ENCODE measurements at regions of chr6 and their contacts with region 1.

Region 1: GRCh38 chr6:44655412-44656342 is 268.2 kb downstream of the CDC5L start:
- DNase-seq: peak; percentile 61 to 68 (median 62)
- H3K4me3 ChIP-seq: no peak overlapping the region
- H3K4me3 Mint-ChIP-seq: peak overlapping the region in 7 of 8 donors; percentile 34 to 76 (median 61)
- H3K27ac ChIP-seq: peak overlapping the region; percentile 6
- H3K27ac Mint-ChIP-seq: peak overlapping the region; percentile 30 to 94 (median 85)
- H3K4me1 ChIP-seq: peaks cover 8% of the 10 kb centered on the region
- H3K4me1 Mint-ChIP-seq: peaks cover 5 to 12% (median 6%) of the 10 kb centered on the region in 4 donors
- H3K27me3 ChIP-seq: no peaks in the 10 kb centered on the region
- H3K27me3 Mint-ChIP-seq: peaks cover 0 to 3% of the 10 kb centered on the region in 2 donors

Region 2: DNA sequence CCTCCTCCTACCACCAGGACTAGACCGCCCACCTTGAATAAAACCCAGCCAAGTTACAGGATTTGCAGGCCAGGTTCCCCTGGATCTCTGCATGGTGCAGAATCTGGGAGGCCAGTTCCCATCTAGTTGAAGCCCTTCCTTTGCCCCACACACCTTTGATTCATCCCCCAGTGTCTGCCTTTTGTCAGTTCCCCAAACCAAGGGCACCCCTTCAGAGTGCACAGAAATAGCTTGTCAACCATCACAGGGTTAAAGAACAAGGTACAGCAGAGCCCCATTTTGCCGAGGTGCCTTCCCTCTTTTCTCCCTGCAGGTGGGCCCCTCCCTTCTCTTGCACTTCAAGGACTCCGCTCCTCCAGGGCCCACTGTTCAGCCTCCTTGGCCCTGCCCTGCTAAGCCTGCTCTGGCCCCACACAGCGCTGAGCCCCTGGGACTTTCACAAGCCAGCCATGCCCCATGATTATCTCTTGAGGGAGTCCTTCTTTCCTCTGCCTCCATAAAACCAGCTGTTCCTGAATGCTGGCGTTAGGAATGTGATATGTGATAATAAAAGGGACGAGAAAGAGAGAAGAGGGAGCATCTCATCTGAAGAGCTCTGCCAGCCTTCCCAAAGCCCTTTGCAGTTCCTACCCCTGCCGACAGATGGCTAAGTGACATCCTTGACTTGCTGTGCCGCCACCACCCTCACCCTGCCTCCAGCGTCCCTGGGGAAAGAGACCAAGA is 12.2 kb after region 1 on chr6:
- CTCF ChIA-PET with region 1: interaction called, 34 read pairs
- POLR2A ChIA-PET with region 1: no interaction called
- intact Hi-C with region 1: no loop called
- DNase-seq: peak in 4 of 5 donors; percentile 9 to 12 (median 11)
- H3K4me3 ChIP-seq: no peak overlapping the region
- H3K4me3 Mint-ChIP-seq: no peak overlapping the region
- H3K27ac ChIP-seq: no peak overlapping the region
- H3K27ac Mint-ChIP-seq: peak overlapping the region in 1 of 7 donors; percentile 30
- H3K4me1 ChIP-seq: no peaks in the 10 kb centered on the region
- H3K4me1 Mint-ChIP-seq: no peaks in the 10 kb centered on the region
- H3K27me3 ChIP-seq: no peaks in the 10 kb centered on the region
- H3K27me3 Mint-ChIP-seq: peaks cover 0 to 1% of the 10 kb centered on the region in 2 donors

Region 3: DNA sequence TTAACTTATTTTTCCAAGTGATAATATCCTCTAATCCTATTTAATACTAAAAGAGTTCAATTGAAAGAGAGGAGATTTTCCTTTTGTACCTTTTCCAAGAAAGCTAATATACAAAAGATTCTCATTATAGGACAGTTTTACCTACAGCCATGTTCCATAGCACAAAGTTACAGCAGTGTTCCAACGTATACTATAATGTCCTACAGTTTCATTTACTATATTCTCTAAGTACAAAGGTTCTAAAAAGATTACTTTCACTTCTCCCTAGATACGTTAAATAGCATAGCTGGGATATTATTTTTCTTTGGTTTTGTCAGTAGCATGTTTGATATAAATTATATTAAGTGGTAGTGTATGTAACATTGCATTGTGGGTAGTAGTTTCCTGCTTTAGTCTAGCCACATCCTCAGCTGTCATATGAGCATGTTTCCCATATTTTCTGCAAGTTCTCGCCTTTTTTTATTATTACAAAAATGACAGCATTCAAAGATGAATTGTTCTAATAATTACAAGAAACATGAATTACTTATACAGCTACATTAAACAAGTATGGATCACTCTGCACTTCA is 668.1 kb after region 1 on chr6:
- CTCF ChIA-PET with region 1: interaction called, 12 read pairs
- POLR2A ChIA-PET with region 1: no interaction called
- intact Hi-C with region 1: no loop called
- DNase-seq: peak in 4 of 5 donors; percentile 21 to 31 (median 26)
- H3K4me3 ChIP-seq: no peak overlapping the region
- H3K4me3 Mint-ChIP-seq: peak overlapping the region in 7 of 8 donors; percentile 26 to 64 (median 60)
- H3K27ac ChIP-seq: no peak overlapping the region
- H3K27ac Mint-ChIP-seq: peak overlapping the region in 3 of 7 donors; percentile 50 to 68 (median 57)
- H3K4me1 ChIP-seq: peaks cover 24% of the 10 kb centered on the region
- H3K4me1 Mint-ChIP-seq: peaks cover 12 to 37% (median 17%) of the 10 kb centered on the region in 4 donors
- H3K27me3 ChIP-seq: no peaks in the 10 kb centered on the region
- H3K27me3 Mint-ChIP-seq: no peaks in the 10 kb centered on the region

Region 4: DNA sequence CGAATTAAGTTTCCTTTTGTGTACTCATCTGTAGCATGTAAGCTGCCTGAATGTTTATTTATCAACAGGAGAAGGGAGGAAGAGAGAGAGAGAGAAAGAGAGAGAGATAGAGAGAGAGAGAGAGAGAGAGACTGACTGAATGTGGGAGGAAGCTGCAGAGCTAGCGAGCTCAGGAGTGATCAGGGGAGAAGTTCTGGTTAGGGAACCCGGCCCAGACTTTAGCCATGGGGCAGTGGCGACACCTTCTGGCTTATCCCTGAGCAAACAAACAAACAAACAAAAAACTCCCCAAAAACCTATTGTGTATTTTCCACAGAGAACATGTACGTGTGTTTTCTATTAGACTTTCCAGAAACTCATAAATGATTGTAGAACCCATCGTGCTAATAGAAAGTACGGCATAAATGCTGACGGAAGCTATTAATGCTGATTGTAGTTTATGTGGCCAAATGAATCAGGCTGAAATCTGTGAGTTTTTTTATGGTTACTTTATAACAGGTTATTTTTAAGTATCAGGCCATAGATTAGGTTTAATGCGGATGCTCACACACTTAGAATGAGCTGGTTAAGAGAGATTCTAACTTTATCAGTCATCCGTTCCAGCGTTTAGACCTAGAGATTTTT is 1267.2 kb after region 1 on chr6:
- CTCF ChIA-PET with region 1: interaction called, 91 read pairs
- POLR2A ChIA-PET with region 1: no interaction called
- intact Hi-C with region 1: loop called (anchors 1 kb)
- DNase-seq: peak; percentile 44 to 52 (median 47)
- H3K4me3 ChIP-seq: no peak overlapping the region
- H3K4me3 Mint-ChIP-seq: peak overlapping the region in 1 of 8 donors; percentile 11
- H3K27ac ChIP-seq: no peak overlapping the region
- H3K27ac Mint-ChIP-seq: peak overlapping the region in 2 of 7 donors; percentile 7 to 41
- H3K4me1 ChIP-seq: no peaks in the 10 kb centered on the region
- H3K4me1 Mint-ChIP-seq: peaks cover 4 to 13% (median 8%) of the 10 kb centered on the region in 4 donors
- H3K27me3 ChIP-seq: no peaks in the 10 kb centered on the region
- H3K27me3 Mint-ChIP-seq: no peaks in the 10 kb centered on the region

Measured in CD4-positive, alpha-beta memory T cell (primary cell).